CD4-positive, alpha-beta memory T cell (primary cell): ENCODE measurements at regions of chr3 and their contacts with region 1.

Region 1: GRCh38 chr3:49339945-49340800 is at the start of gene USP4:
- DNase-seq: peak; percentile 91 to 93 (median 91)
- H3K4me3 ChIP-seq: peak within 1 kb of the TSS; percentile 63 to 81
- H3K4me3 Mint-ChIP-seq: peak within 1 kb of the TSS; percentile 91 to 97 (median 94)
- H3K27ac ChIP-seq: peak within 1 kb of the TSS; percentile 92
- H3K27ac Mint-ChIP-seq: peak within 1 kb of the TSS; percentile 96 to 100 (median 98)
- H3K4me1 ChIP-seq: peaks cover 56% of the 10 kb centered on the region
- H3K4me1 Mint-ChIP-seq: peaks cover 27 to 51% (median 41%) of the 10 kb centered on the region in 4 donors
- H3K27me3 ChIP-seq: no peaks in the 10 kb centered on the region
- H3K27me3 Mint-ChIP-seq: no peaks in the 10 kb centered on the region
- total RNA-seq, gene USP4: 111 to 114 TPM

Region 2: GRCh38 chr3:49171119-49171774 is 168.9 kb before region 1 on chr3 and contains the start of gene KLHDC8B:
- CTCF ChIA-PET with region 1: interaction called, 10 read pairs
- POLR2A ChIA-PET with region 1: interaction called, 12 read pairs
- intact Hi-C with region 1: no loop called
- DNase-seq: peak; percentile 74 to 77 (median 76)
- H3K4me3 ChIP-seq: peak within 1 kb of the TSS; percentile 57 to 72
- H3K4me3 Mint-ChIP-seq: peak within 1 kb of the TSS; percentile 85 to 90 (median 88)
- H3K27ac ChIP-seq: peak within 1 kb of the TSS; percentile 32
- H3K27ac Mint-ChIP-seq: peak within 1 kb of the TSS; percentile 51 to 85 (median 66)
- H3K4me1 ChIP-seq: peaks cover 21% of the 10 kb centered on the region
- H3K4me1 Mint-ChIP-seq: peaks cover 6 to 30% (median 16%) of the 10 kb centered on the region in 4 donors
- H3K27me3 ChIP-seq: no peaks in the 10 kb centered on the region
- H3K27me3 Mint-ChIP-seq: no peaks in the 10 kb centered on the region
- total RNA-seq, gene KLHDC8B: 1.9 to 2.0 TPM

Region 3: DNA sequence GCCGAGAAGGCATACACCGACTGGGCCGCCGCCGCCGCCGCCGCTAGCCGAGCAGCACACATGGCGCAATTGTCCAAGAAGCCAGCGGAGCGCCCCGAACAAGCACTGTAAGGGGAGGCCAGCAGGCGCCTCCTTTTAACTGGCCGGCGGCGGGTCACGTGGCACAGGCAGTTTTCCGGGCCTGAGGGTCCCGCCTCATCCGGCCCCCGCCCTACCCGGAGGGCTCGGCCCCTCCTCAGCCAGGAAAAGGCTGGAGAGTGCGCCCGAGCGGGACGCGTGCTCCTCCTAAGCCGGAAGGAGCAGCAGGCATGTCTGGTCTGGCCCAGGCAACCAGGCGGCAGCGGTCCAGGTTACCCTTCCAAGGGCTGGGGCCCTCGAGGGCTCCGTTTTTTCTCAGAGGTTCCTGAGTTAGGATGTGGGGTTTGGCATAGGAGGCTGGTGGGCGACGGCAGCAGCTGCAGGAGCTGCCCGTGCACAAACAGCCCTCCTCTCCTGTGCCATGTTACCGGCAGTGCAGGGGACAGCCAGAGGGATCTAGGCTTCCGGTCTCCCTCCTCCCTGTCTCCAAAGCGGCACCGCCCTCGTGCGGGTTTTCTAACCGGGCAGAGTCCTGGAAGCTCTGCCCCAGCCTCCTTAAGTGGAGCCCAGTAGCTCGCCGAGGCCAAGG is 18.2 kb after region 1 on chr3 and contains the start of gene GPX1:
- CTCF ChIA-PET with region 1: interaction called, 32 read pairs
- POLR2A ChIA-PET with region 1: interaction called, 139 read pairs
- intact Hi-C with region 1: loop called (anchors 1 kb)
- DNase-seq: peak; percentile 60 to 80 (median 65)
- H3K4me3 ChIP-seq: peak within 1 kb of the TSS; percentile 78 to 87
- H3K4me3 Mint-ChIP-seq: peak within 1 kb of the TSS; percentile 91 to 97 (median 94)
- H3K27ac ChIP-seq: peak within 1 kb of the TSS; percentile 73
- H3K27ac Mint-ChIP-seq: peak within 1 kb of the TSS; percentile 93 to 98 (median 95)
- H3K4me1 ChIP-seq: peaks cover 26% of the 10 kb centered on the region
- H3K4me1 Mint-ChIP-seq: peaks cover 8 to 32% (median 20%) of the 10 kb centered on the region in 4 donors
- H3K27me3 ChIP-seq: no peaks in the 10 kb centered on the region
- H3K27me3 Mint-ChIP-seq: no peaks in the 10 kb centered on the region
- total RNA-seq, gene GPX1: 75.7 to 77.7 TPM

Region 4: GRCh38 chr3:49411968-49412631 is 71.9 kb after region 1 on chr3 and contains the starts of genes RHOA and TCTA:
- CTCF ChIA-PET with region 1: interaction called, 21 read pairs
- POLR2A ChIA-PET with region 1: interaction called, 179 read pairs
- intact Hi-C with region 1: loop called (anchors 1 kb)
- DNase-seq: peak; percentile 97 to 100 (median 100)
- H3K4me3 ChIP-seq: peak within 1 kb of the TSS; percentile 78 to 89
- H3K4me3 Mint-ChIP-seq: peak within 1 kb of the TSS; percentile 91 to 98 (median 94)
- H3K27ac ChIP-seq: peak within 1 kb of the TSS; percentile 93
- H3K27ac Mint-ChIP-seq: peak within 1 kb of the TSS; percentile 95 to 99 (median 97)
- H3K4me1 ChIP-seq: peaks cover 81% of the 10 kb centered on the region
- H3K4me1 Mint-ChIP-seq: peaks cover 51 to 82% (median 63%) of the 10 kb centered on the region in 4 donors
- H3K27me3 ChIP-seq: no peaks in the 10 kb centered on the region
- H3K27me3 Mint-ChIP-seq: no peaks in the 10 kb centered on the region
- total RNA-seq, gene RHOA: 246 to 269 TPM
- total RNA-seq, gene TCTA: 38.0 to 39.0 TPM

Region 5: DNA sequence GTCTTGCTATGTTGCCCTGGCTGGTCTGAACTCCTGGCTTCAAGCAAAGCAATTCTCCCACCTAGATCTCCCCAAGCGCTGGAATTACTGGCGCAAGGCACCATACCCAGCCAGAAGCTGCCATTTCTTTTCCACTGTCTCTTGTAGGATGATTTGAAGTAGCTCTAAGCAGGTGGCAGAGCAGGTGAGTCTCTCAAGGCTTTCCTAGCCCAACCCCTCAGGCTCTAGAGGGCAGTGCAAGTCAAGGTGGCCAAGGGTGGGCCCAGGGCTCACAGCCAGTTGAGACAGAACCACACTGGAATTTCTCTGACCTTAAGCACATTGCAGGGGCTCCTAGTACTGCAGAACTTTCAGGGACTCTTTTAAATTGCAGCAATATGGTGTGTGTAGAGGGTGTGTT is 114.3 kb after region 1 on chr3:
- CTCF ChIA-PET with region 1: interaction called, 147 read pairs
- POLR2A ChIA-PET with region 1: interaction called, 47 read pairs
- intact Hi-C with region 1: loop called (anchors 1 kb)
- DNase-seq: no peak
- H3K4me3 ChIP-seq: no peak overlapping the region
- H3K4me3 Mint-ChIP-seq: no peak overlapping the region
- H3K27ac ChIP-seq: no peak overlapping the region
- H3K27ac Mint-ChIP-seq: peak overlapping the region in 2 of 7 donors; percentile 19 to 60
- H3K4me1 ChIP-seq: no peaks in the 10 kb centered on the region
- H3K4me1 Mint-ChIP-seq: no peaks in the 10 kb centered on the region
- H3K27me3 ChIP-seq: no peaks in the 10 kb centered on the region
- H3K27me3 Mint-ChIP-seq: peaks cover 0 to 3% of the 10 kb centered on the region in 2 donors